CD8-positive, alpha-beta T cell (primary cell): ENCODE measurements at regions of chr1 and their contacts with region 1.

Region 1: DNA sequence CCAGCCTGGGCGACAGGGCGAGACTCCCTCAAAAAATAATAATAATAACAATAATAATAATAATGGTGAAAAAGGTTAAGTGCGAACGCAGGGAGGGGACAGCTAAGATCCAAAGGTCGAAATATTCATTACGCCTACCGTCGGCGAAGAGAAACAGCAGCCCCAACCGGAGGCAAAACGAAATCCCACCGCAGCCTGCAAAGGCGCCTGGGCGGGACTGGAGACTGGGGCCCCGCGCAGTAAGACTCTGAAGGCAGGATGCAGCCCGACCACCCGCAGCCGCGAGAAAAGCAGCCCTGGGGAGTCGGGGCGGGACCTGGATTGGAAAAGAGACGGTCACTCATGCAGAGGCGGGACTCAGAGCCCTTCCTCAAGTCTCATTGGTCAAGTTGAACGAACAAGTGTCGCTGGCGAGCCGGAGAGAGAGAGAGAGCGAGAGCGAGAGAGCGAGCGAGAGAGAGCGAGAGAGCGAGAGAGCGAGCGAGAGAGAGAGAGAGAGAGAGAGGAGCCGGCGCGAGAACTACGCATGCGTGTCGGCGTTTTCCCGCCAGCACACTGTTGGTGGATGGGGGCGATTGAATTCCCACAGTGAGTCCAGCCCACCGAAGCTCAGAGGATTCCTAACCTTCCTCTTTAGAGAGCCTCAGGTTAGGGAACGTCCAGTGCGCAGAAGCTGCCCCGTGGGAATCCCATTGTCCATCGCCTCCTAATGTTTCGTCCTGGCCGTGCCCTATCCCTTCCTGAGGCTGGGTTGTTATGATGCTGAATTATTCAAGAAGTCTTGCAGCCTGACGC is 10.7 kb downstream of the ENTREP3 start:
- DNase-seq: peak; percentile 89 to 99 (median 96)
- ATAC-seq: peak; percentile 95
- H3K4me3 ChIP-seq: peak overlapping the region; percentile 59 to 73
- H3K4me3 Mint-ChIP-seq: peak overlapping the region; percentile 88
- H3K27ac ChIP-seq: peak overlapping the region; percentile 71 to 78
- H3K27ac Mint-ChIP-seq: peak overlapping the region; percentile 97
- H3K4me1 ChIP-seq: peaks cover 34% of the 10 kb centered on the region
- H3K4me1 Mint-ChIP-seq: peaks cover 43% of the 10 kb centered on the region
- H3K27me3 ChIP-seq: no peaks in the 10 kb centered on the region
- H3K27me3 Mint-ChIP-seq: peaks cover 2% of the 10 kb centered on the region
- CTCF ChIP-seq: peak; percentile 62

Region 2: DNA sequence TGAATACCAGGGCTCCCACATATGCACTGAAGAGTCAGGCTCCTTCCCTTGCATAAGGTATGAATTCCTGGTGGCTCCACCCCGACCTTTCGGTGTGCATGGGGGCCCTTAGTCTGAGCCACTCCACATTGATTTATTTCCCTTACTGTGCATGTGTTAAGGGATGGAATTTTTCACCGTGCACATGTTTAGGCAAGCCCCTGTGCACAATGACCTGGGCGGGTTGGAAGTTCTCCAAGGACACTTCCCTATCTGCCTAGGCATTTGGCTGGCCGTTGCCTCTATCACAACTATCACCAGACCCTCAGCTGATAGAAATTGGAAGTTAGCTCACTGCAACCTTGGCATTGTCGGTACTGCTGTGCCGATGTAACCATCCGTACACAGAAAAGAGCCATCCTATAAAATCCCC is 1718.4 kb before region 1 on chr1:
- CTCF ChIA-PET with region 1: no interaction called
- POLR2A ChIA-PET with region 1: no interaction called
- intact Hi-C with region 1: no loop called
- DNase-seq: no peak
- ATAC-seq: no peak
- H3K4me3 ChIP-seq: no peak overlapping the region
- H3K4me3 Mint-ChIP-seq: no peak overlapping the region
- H3K27ac ChIP-seq: no peak overlapping the region
- H3K27ac Mint-ChIP-seq: no peak overlapping the region
- H3K4me1 ChIP-seq: peaks cover 5% of the 10 kb centered on the region
- H3K4me1 Mint-ChIP-seq: peaks cover 8% of the 10 kb centered on the region
- H3K27me3 ChIP-seq: no peaks in the 10 kb centered on the region
- H3K27me3 Mint-ChIP-seq: no peaks in the 10 kb centered on the region
- CTCF ChIP-seq: no peak

Region 3: DNA sequence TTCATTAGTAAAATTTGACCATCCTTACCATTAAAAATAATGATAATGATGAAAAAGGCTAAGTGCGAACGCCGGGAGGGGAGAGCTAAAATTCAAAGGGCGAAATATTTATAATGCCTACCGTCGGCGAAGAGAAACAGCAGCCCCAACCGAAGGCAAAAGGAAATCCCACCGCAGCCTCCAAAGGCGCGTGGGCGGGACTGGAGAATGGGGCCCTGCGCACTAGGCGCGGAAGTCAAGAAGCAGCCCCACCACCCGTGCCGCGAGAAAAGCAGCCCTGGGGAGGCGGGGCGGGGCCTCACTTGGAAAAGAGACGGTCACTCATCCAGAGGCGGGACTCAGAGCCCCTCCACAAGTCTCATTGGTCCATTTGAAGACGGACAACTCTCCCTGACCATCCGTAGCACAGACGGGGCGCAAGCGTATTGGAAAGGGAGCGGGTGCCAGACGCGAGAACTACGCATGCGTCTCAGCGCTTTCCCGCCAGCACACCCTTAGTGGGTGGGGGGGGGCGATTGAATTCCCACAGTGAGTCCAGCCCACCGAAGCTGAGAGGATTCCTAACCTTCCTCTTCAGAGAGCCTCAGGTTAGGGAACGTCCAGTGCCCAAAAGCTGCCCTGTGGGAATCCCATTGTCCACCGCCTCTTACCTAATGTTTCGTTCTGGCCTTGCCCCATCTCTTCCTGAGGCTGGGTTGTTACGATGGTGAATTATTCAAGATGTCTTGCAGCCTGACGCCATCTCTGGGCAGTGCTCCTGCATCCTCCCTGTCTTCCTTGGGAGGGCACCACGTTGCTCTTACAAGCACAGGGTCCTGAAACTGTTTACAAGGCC is 17.1 kb before region 1 on chr1:
- CTCF ChIA-PET with region 1: interaction called, 8 read pairs
- POLR2A ChIA-PET with region 1: interaction called, 18 read pairs
- intact Hi-C with region 1: loop called (anchors 1 kb)
- DNase-seq: peak; percentile 95 to 100 (median 98)
- ATAC-seq: peak; percentile 95
- H3K4me3 ChIP-seq: peak overlapping the region; percentile 71 to 74
- H3K4me3 Mint-ChIP-seq: peak overlapping the region; percentile 88
- H3K27ac ChIP-seq: peak overlapping the region; percentile 70 to 86
- H3K27ac Mint-ChIP-seq: peak overlapping the region; percentile 85
- H3K4me1 ChIP-seq: peaks cover 18% of the 10 kb centered on the region
- H3K4me1 Mint-ChIP-seq: peaks cover 24% of the 10 kb centered on the region
- H3K27me3 ChIP-seq: no peaks in the 10 kb centered on the region
- H3K27me3 Mint-ChIP-seq: no peaks in the 10 kb centered on the region
- CTCF ChIP-seq: no peak

Region 4: DNA sequence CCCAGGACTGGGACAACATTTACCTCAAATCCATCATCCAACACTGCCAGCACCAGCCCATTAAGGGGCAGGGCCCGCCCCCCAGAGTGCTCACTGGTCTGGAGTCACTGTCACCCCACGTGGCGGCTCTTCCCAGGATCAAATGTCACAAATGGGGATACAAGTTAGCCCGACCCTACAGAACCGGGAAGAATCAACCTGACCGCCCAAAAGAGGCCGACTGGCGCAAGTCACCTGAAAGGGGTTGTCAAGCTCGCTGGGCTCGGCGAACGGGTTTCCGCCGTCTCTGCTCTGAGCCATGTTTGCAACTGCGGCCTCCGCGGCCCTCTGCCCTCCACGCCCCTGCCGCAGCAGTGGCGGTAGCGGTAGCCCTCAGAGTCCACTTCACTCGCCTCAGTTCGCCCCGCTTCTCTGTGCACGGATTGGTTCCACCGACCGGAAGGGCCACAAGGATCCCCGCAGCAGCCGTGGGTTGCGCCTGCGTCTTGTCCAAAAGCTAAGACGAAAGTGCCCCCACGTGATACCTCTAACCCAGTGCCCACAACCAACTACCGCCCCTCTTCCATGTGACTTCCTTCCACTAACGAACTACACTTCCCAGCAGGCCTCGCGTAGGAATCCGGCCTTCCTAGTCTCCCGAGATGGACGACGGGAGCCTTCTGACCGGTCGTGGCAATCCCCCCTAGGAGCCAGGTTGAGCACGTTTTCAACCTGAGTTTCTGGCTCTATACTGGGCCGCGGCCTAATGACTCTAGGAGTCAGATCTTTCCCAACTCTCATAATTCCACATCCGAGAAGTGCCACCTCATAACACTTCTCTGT is 17.5 kb after region 1 on chr1 and contains the start of gene SCAMP3:
- CTCF ChIA-PET with region 1: interaction called, 121 read pairs
- POLR2A ChIA-PET with region 1: interaction called, 17 read pairs
- intact Hi-C with region 1: no loop called
- DNase-seq: peak; percentile 61 to 96 (median 84)
- ATAC-seq: peak; percentile 95
- H3K4me3 ChIP-seq: peak within 1 kb of the TSS; percentile 79 to 86
- H3K4me3 Mint-ChIP-seq: peak within 1 kb of the TSS; percentile 100
- H3K27ac ChIP-seq: peak within 1 kb of the TSS; percentile 72 to 85
- H3K27ac Mint-ChIP-seq: peak within 1 kb of the TSS; percentile 97
- H3K4me1 ChIP-seq: peaks cover 16% of the 10 kb centered on the region
- H3K4me1 Mint-ChIP-seq: peaks cover 29% of the 10 kb centered on the region
- H3K27me3 ChIP-seq: no peaks in the 10 kb centered on the region
- H3K27me3 Mint-ChIP-seq: no peaks in the 10 kb centered on the region
- CTCF ChIP-seq: no peak
- total RNA-seq, gene SCAMP3: 47.5 to 48.5 TPM

Region 5: GRCh38 chr1:155323798-155324610 is 79.4 kb after region 1 on chr1:
- CTCF ChIA-PET with region 1: interaction called, 152 read pairs
- POLR2A ChIA-PET with region 1: interaction called, 22 read pairs
- intact Hi-C with region 1: loop called in 1 of 2 experiments (anchors 1 kb)
- DNase-seq: peak; percentile 66 to 94 (median 85)
- ATAC-seq: peak; percentile 81
- H3K4me3 ChIP-seq: peak overlapping the region; percentile 89 to 100
- H3K4me3 Mint-ChIP-seq: peak overlapping the region; percentile 90
- H3K27ac ChIP-seq: peak overlapping the region; percentile 69 to 90
- H3K27ac Mint-ChIP-seq: peak overlapping the region; percentile 55
- H3K4me1 ChIP-seq: peaks cover 34% of the 10 kb centered on the region
- H3K4me1 Mint-ChIP-seq: peaks cover 33% of the 10 kb centered on the region
- H3K27me3 ChIP-seq: no peaks in the 10 kb centered on the region
- H3K27me3 Mint-ChIP-seq: no peaks in the 10 kb centered on the region
- CTCF ChIP-seq: no peak